AG04449 (cell line): ENCODE measurements at regions of chr11 and their contacts with region 1.

Region 1: GRCh38 chr11:27254729-27255446 is 108.1 kb downstream of the CCDC34 start:
- DNase-seq: peak; percentile 88
- H3K4me3 ChIP-seq: no peak overlapping the region
- CTCF ChIP-seq: no peak

Region 2: DNA sequence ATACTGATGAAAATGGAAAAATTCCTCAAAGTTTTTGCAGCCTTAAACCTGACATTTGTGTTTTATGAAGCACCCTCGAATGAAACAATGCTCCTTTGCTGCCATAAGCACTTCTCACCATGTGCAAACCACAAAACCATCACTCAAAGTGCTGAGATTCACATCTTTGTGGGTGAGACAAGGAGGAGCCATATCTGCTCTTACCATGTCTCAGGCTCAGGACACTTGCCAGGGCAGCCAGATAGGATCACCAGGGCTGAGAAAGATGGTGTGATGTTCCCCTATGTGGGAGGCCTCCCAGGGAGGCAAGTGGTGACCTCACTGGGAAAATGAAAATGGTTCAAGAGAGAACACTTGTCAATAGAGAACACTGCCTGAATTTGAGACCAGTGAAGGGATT is 12.3 kb before region 1 on chr11:
- CTCF ChIA-PET with region 1: interaction called, 11 read pairs
- POLR2A ChIA-PET with region 1: no interaction called
- DNase-seq: peak; percentile 89
- H3K4me3 ChIP-seq: no peak overlapping the region
- CTCF ChIP-seq: no peak